ENCODE measurements at regions of chr19 and their contacts with region 1.

Region 1: GRCh38 chr19:35114353-35115176 is 1.1 kb upstream of the FXYD3 start:
- DNase-seq: no peak
- H3K4me3 ChIP-seq: peak overlapping the region; percentile 6; the same call in 1 of the 2 replicates
- CTCF ChIP-seq: peak; percentile 96

Region 2: GRCh38 chr19:35090506-35091237 is 23.9 kb before region 1 on chr19:
- CTCF ChIA-PET with region 1: interaction called, 10 read pairs
- POLR2A ChIA-PET with region 1: no interaction called
- DNase-seq: no peak
- H3K4me3 ChIP-seq: no peak overlapping the region
- CTCF ChIP-seq: peak; percentile 41

Region 3: DNA sequence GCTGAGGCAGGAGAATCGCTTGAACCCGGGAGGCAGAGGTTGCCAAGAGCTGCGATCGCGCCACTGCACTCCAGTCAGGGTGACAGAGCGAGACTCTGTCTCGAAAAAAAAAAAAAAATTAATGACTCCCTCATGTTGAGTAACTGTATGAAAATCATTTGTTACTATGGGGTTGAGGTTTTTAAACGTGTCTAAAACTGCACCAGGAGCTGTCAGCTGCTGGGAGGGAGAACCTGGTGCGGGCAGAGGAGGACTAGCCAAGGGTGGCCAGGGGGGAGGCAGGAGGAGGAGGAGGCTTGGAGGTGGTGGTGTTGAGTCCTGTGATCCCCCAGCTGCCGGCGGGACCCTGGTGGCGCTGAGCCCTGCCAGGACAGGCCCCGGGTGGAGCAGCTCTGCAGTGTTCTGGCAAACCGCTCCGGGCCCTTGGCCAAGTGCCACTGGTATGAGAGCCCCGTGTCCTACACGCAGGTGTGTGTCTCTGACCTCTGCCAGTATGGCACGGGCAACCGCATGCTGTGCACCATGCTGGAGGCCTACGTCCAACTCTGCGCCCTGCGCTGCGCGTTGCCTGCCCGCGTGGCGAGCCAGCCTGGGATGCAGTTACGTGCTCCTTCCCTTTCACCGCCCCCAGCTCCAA is 16.0 kb before region 1 on chr19:
- CTCF ChIA-PET with region 1: interaction called, 29 read pairs
- POLR2A ChIA-PET with region 1: no interaction called
- DNase-seq: no peak
- H3K4me3 ChIP-seq: no peak overlapping the region
- CTCF ChIP-seq: no peak

Region 4: GRCh38 chr19:35168207-35168606 is 53.6 kb after region 1 on chr19:
- CTCF ChIA-PET with region 1: no interaction called
- POLR2A ChIA-PET with region 1: no interaction called
- DNase-seq: no peak
- H3K4me3 ChIP-seq: no peak overlapping the region
- CTCF ChIP-seq: no peak